ENCODE measurements at regions of chr14 and their contacts with region 1.

Region 1: DNA sequence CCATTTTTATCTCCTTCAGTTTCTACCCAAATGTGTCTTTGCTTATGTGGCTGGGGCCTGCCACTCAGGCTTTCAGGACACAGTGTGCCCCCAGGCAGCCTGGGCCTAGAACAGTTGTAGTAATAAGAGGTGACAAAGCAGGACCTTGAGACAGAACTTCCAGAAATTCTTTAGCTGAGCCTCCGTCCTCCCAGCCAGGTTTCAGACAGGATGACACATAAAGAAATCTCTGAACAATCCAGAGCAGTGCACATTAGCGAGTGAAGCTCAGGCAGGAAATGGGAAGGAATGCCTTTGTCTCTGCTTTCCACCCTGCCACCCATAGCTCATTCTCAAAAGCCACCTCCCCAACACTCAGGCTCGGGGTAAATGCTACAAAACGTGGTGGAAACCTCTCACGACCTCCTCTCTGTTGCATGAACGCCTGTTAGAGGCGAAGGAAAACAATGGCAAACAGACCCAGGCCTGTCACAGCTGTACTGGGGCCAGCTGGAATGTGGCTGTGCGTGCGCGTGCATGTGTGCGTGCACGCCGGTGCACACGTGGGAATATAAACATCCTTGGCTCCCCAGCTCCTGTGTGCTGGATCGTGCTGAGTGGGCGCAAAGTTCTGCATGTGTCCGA is 286.7 kb downstream of the ZFP36L1 start:
- DNase-seq: no peak
- H3K4me3 ChIP-seq: no peak overlapping the region
- H3K27ac ChIP-seq: peak overlapping the region; percentile 42
- H3K4me1 ChIP-seq: no peaks in the 10 kb centered on the region
- H3K27me3 ChIP-seq: no peaks in the 10 kb centered on the region
- CTCF ChIP-seq: no peak

Region 2: GRCh38 chr14:67908052-67908754 is 597.9 kb before region 1 on chr14:
- intact Hi-C with region 1: loop called (anchors 10 kb)
- DNase-seq: no peak
- H3K4me3 ChIP-seq: no peak overlapping the region
- H3K27ac ChIP-seq: no peak overlapping the region
- H3K4me1 ChIP-seq: no peaks in the 10 kb centered on the region
- H3K27me3 ChIP-seq: no peaks in the 10 kb centered on the region
- CTCF ChIP-seq: no peak

Measured in colonic mucosa (tissue), 4 donors.